ENCODE measurements at regions of chr15 and their contacts with region 1.

Region 1: DNA sequence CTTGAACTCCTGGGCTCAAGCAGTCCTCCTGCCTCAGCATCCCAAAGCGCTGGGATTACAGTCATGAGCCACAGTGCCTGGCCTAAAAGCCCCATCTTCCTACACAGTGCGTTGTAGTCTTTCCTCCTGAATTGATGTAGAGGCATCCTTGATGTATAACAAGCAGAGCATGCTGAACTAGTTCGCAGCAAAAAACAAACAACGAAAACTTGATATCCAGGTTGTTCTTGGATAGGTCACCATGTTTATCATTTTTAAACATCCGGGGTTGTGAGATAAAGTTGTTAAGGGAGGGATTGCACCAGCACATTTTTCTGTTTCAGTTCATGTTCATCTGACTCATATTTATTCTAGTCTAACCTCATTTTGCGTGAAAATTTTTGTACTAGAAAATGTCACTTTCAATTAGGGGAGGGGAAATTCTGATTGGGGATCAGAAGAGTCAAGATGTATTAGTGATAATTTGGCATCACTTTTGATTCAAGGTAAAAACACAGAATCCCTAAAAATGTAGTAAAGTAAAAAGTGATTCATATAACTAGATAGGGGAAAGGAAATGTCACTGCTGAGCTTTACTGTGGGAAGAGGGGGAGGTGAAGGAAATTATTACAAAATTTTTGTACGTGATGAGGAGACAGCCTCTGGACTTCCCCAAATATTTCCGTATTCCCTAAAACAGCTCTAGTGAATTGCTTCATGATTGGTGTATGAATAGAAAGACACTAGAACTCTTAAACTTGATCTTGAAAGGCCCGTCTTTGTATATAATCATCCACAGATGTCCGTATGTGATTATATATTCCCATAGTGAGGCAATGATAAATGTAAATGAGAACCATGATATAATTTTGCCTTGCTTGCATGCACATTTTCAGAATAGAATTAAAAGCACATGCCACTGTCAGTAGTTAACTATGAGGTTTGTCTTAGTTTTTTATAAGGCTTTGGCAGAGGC is 22.9 kb downstream of the RAB8B start:
- DNase-seq: no peak

Region 2: GRCh38 chr15:63052961-63053698 is 159.2 kb before region 1 on chr15:
- CTCF ChIA-PET with region 1: no interaction called
- POLR2A ChIA-PET with region 1: no interaction called
- DNase-seq: no peak

Region 3: DNA sequence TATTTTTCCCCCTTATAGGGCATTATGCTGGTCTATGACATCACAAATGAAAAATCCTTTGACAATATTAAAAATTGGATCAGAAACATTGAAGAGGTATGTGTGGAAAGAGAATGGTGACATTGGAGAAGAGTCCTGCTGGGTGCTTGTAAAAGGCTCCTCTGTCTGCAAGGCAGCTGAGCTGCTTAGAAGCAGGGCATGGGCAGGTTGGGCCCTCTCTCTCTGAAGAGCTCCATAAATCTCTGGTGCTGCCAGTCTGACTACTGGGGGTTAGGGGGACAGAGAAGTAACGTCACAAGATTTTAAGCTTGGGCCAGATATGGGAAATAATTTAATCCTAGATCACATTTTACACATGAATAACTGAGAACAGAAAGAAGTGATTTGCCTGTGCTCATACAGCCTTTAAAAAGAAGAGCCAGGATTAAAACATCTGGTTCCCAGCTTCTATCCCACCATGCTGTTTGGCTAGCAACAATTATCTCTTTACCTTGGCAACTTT is 43.2 kb after region 1 on chr15:
- CTCF ChIA-PET with region 1: interaction called, 11 read pairs
- POLR2A ChIA-PET with region 1: no interaction called
- DNase-seq: no peak

Region 4: GRCh38 chr15:63439536-63440264 is 227.4 kb after region 1 on chr15:
- CTCF ChIA-PET with region 1: no interaction called
- POLR2A ChIA-PET with region 1: no interaction called
- DNase-seq: no peak

Measured in HEK293T (cell line).